ENCODE measurements at regions of chr2 and their contacts with region 1.

Region 1: GRCh38 chr2:38740851-38741731 is 10.1 kb downstream of the SRSF7 start:
- DNase-seq: no peak
- ATAC-seq: peak; percentile 8 to 19

Region 2: DNA sequence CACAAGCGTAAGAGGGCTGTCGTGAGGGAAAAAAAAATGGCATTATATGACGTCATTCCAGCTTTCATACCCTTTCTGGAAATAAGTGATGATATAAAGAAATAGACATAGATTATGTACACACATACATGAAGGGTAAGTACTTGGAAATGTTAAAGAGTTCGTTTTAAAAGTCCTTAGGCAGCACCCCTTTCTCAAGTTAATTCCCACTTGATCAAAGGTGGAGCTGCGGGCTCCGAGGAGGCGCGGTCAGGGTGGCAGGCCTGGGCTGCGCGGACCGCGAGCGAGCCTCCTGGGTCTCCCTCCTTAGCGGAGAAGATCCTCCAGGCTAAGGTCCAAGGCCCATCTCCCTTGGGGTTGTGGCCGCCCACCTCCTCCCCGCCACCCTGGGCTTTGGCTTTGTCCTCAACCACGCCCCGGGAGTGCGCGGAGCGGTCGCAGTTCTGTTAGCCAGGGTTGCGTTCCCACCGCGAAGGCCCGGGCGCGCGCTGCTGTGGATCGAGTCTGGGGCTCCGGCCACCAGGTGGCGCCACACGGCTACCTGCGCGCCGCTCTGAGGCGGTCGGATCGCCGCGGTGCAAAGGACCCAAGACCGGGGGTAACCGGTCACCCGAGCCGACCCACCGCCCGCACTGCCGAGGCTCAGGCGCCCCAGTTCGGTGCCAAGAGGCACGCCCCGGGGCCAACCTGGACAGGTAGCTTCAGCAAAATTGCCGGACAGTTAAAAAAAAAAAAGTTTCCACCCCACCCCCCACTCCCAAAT is 205.2 kb before region 1 on chr2:
- intact Hi-C with region 1: loop called in 1 of 2 experiments (anchors 2 kb)
- DNase-seq: peak; percentile 91
- ATAC-seq: peak; percentile 94 to 97

Region 3: DNA sequence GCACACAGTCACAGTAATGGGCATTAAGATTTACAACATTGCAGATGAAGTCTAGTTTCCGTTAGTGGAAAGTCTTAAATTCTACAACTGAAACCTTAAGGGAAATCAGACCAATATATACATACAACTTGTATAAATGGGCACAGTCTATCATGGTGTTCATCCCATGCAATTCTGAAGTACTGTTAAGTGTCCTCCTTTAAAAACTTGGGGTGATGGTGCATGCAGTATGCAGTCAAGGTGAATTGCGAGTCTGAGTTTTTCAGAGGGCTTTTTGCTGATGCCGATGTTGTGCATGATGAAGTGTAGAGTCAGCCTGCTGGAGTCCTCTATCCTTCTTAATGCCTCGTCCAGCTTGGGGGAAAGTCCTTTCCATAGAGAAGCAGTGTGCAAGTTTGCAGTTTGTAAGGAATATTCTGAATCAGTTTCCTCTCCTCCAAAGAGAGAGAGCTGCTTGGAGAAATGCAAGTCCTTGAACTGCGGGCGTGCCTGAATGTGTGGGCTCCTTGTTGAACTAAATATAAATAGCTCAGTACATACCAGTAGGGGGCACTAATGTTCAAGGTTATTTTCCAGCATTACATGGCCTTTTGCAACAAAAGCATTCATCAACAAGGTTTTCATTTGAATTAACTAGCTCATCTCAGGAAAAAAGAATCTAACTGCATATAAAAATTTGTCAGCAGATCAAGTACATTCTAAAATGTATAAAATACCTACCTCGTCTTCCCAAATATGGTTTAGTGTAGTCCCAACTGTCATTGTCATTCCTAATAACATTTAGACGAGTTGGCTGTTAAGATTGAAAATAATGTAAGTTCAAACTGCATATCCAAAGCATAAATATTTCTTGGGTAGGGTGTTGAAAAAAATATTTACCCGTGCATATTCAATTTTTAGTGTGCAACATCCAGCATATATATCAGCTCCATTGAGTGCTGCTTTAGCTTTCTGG is 159.6 kb before region 1 on chr2:
- intact Hi-C with region 1: loop called (anchors 5 kb)
- DNase-seq: peak; percentile 34
- ATAC-seq: peak; percentile 72 to 79

Region 4: GRCh38 chr2:38728694-38729093 is 12.4 kb before region 1 on chr2:
- intact Hi-C with region 1: loop called in 1 of 2 experiments (anchors 1 kb)
- DNase-seq: no peak
- ATAC-seq: no peak

Measured in left cardiac atrium (tissue), 4 donors.